Activated naive CD4-positive, alpha-beta T cell treated with anti-CD3 and anti-CD28 coated beads, Interleukin-2, amount 10 ng/mL, durations not matched to agents 7 days and 5 days (primary cell): ENCODE measurements at regions of chr11 and their contacts with region 1.

Region 1: GRCh38 chr11:61733120-61733978 is 19.1 kb upstream of the MYRF start:
- DNase-seq: peak; percentile 91
- H3K4me3 Mint-ChIP-seq: no peak overlapping the region
- H3K27ac Mint-ChIP-seq: no peak overlapping the region
- H3K4me1 Mint-ChIP-seq: no peaks in the 10 kb centered on the region
- H3K27me3 Mint-ChIP-seq: peaks cover 10% of the 10 kb centered on the region

Region 2: GRCh38 chr11:61650781-61651571 is 82.4 kb before region 1 on chr11:
- CTCF ChIA-PET with region 1: no interaction called
- DNase-seq: no peak
- H3K4me3 Mint-ChIP-seq: no peak overlapping the region
- H3K27ac Mint-ChIP-seq: no peak overlapping the region
- H3K4me1 Mint-ChIP-seq: no peaks in the 10 kb centered on the region
- H3K27me3 Mint-ChIP-seq: peaks cover 22% of the 10 kb centered on the region

Region 3: GRCh38 chr11:61679893-61680621 is 53.3 kb before region 1 on chr11 and contains the start of gene DAGLA:
- CTCF ChIA-PET with region 1: interaction called, 49 read pairs
- DNase-seq: peak; percentile 77
- H3K4me3 Mint-ChIP-seq: peak within 1 kb of the TSS; percentile 43
- H3K27ac Mint-ChIP-seq: no peak within 1 kb of the TSS
- H3K4me1 Mint-ChIP-seq: peaks cover 5% of the 10 kb centered on the region
- H3K27me3 Mint-ChIP-seq: peaks cover 38% of the 10 kb centered on the region

Region 4: DNA sequence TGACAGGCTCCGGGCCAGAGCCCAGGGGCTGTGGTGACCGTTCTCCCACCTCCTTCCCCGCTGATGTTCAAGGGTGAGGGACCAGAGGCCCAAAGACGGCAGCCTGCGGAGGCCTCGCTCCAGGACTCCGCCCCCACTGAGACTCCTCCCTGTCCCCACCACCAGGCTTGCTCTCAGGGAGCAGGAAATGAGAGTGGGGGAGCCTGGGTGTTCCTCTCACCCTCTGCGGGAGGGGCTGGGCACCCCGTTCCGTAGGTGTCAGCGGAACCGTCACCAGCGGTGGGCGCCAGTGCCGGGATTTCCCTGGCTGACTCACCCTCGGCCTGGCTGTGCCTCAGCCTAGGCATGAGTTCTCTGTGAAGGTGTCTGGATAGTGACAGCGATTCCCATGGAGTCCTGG is 37.4 kb before region 1 on chr11:
- CTCF ChIA-PET with region 1: interaction called, 23 read pairs
- DNase-seq: peak; percentile 94
- H3K4me3 Mint-ChIP-seq: peak overlapping the region; percentile 21
- H3K27ac Mint-ChIP-seq: peak overlapping the region; percentile 46
- H3K4me1 Mint-ChIP-seq: peaks cover 31% of the 10 kb centered on the region
- H3K27me3 Mint-ChIP-seq: peaks cover 50% of the 10 kb centered on the region